T-cell (primary cell): ENCODE measurements at regions of chr9 and their contacts with region 1.

Region 1: GRCh38 chr9:127916665-127917613 is at the start of gene ST6GALNAC4:
- DNase-seq: peak; percentile 83 to 97 (median 92)
- ATAC-seq: peak; percentile 94 to 98 (median 96)
- H3K4me3 ChIP-seq: peak within 1 kb of the TSS; percentile 77 to 89
- H3K4me3 Mint-ChIP-seq: peak within 1 kb of the TSS; percentile 80 to 82 (median 81)
- H3K27ac ChIP-seq: peak within 1 kb of the TSS; percentile 16
- H3K27ac Mint-ChIP-seq: peak within 1 kb of the TSS; percentile 82 to 89
- H3K4me1 ChIP-seq: peaks cover 16 to 58% of the 10 kb centered on the region in 2 experiments
- H3K4me1 Mint-ChIP-seq: peaks cover 43 to 63% (median 49%) of the 10 kb centered on the region in 3 donors
- H3K27me3 ChIP-seq: peaks cover 0 to 10% of the 10 kb centered on the region in 2 experiments
- H3K27me3 Mint-ChIP-seq: no peaks in the 10 kb centered on the region
- total RNA-seq, gene ST6GALNAC4: 24.9 to 40.7 (median 35.1) TPM

Region 2: GRCh38 chr9:127734747-127735529 is 182.0 kb before region 1 on chr9 and contains the start of gene TOR2A:
- CTCF ChIA-PET with region 1: interaction called, 7 to 14 read pairs
- POLR2A ChIA-PET with region 1: interaction called in 1 of 2 experiments, 5 read pairs
- DNase-seq: peak; percentile 96 to 100 (median 99)
- ATAC-seq: peak; percentile 90 to 93 (median 92)
- H3K4me3 ChIP-seq: peak within 1 kb of the TSS; percentile 60 to 69
- H3K4me3 Mint-ChIP-seq: peak within 1 kb of the TSS; percentile 82 to 94 (median 85)
- H3K27ac ChIP-seq: peak within 1 kb of the TSS; percentile 95
- H3K27ac Mint-ChIP-seq: peak within 1 kb of the TSS; percentile 92 to 97
- H3K4me1 ChIP-seq: peaks cover 2 to 23% of the 10 kb centered on the region in 2 experiments
- H3K4me1 Mint-ChIP-seq: peaks cover 5 to 22% (median 18%) of the 10 kb centered on the region in 3 donors
- H3K27me3 ChIP-seq: no peaks in the 10 kb centered on the region
- H3K27me3 Mint-ChIP-seq: no peaks in the 10 kb centered on the region
- total RNA-seq, gene TOR2A: 7.7 to 18.4 (median 15.5) TPM

Region 3: GRCh38 chr9:127905004-127905728 is 11.8 kb before region 1 on chr9:
- CTCF ChIA-PET with region 1: interaction called, 3 to 14 read pairs
- POLR2A ChIA-PET with region 1: interaction called in 1 of 2 experiments, 15 read pairs
- DNase-seq: peak in 33 of 35 experiments; percentile 37 to 77 (median 60)
- ATAC-seq: peak; percentile 46 to 68 (median 60)
- H3K4me3 ChIP-seq: peak overlapping the region; percentile 53 to 64
- H3K4me3 Mint-ChIP-seq: peak overlapping the region; percentile 91 to 95 (median 94)
- H3K27ac ChIP-seq: peak overlapping the region; percentile 99
- H3K27ac Mint-ChIP-seq: peak overlapping the region; percentile 99 to 100
- H3K4me1 ChIP-seq: peaks cover 29 to 75% of the 10 kb centered on the region in 2 experiments
- H3K4me1 Mint-ChIP-seq: peaks cover 50 to 54% (median 53%) of the 10 kb centered on the region in 3 donors
- H3K27me3 ChIP-seq: no peaks in the 10 kb centered on the region
- H3K27me3 Mint-ChIP-seq: no peaks in the 10 kb centered on the region

Region 4: GRCh38 chr9:128080206-128080605 is 163.3 kb after region 1 on chr9:
- CTCF ChIA-PET with region 1: interaction called in 1 of 2 experiments, 11 read pairs
- POLR2A ChIA-PET with region 1: no interaction called
- DNase-seq: no peak
- ATAC-seq: no peak
- H3K4me3 ChIP-seq: no peak overlapping the region
- H3K4me3 Mint-ChIP-seq: no peak overlapping the region
- H3K27ac ChIP-seq: no peak overlapping the region
- H3K27ac Mint-ChIP-seq: no peak overlapping the region
- H3K4me1 ChIP-seq: peaks cover 2 to 45% of the 10 kb centered on the region in 2 experiments
- H3K4me1 Mint-ChIP-seq: peaks cover 37 to 55% (median 52%) of the 10 kb centered on the region in 3 donors
- H3K27me3 ChIP-seq: no peaks in the 10 kb centered on the region
- H3K27me3 Mint-ChIP-seq: no peaks in the 10 kb centered on the region